ENCODE measurements at regions of chrX and their contacts with region 1.

Region 1: DNA sequence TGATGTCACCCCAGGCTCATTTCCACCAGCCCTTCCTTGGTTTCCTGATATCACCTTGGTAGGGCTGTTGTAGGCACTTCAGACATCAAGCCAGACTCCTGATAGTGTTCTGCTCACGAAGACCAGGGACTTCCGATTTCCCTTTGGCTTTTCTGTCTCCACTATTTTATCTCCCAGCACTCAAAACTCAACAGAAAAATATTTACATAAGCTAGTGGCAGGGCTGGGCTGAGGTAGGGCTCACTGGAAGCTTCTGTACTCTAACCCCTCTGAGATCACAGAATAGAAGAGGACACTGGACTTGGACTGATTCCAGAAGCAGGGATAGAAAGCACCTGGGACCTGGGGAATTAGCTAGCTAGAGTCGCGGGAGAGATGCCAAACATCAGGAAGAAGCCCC is 34.4 kb upstream of the EFNB1 start:
- DNase-seq: no peak
- ATAC-seq: peak in 1 of 8 donors; percentile 29
- H3K4me3 ChIP-seq: no peak overlapping the region
- H3K27ac ChIP-seq: no peak overlapping the region
- H3K4me1 ChIP-seq: no peaks in the 10 kb centered on the region
- H3K27me3 ChIP-seq: peaks cover 0 to 14% (median 0%) of the 10 kb centered on the region in 7 donors
- CTCF ChIP-seq: no peak

Region 2: DNA sequence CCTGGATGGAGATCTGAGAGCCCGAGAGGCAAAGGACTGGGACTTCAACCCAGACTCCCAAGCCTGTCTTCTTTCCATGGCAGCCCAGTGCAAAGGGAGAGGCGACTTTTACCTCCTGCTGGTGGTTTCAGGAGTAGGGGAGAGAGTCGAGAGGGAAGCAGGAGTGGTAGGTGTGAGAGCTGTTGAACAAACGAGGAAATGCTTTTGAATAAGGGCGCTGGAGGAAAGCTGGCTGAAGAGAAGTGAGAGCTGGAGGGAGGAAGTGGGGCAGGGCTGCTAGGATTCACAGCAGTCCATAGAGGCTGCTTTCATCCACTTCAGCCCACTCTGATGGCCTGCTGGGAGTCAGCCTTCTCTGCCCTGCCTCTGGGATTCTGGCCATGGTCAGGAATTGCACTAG is 47.5 kb before region 1 on chrX:
- intact Hi-C with region 1: loop called in 1 of 10 experiments (anchors 10 kb)
- DNase-seq: no peak
- ATAC-seq: no peak
- H3K4me3 ChIP-seq: no peak overlapping the region
- H3K27ac ChIP-seq: no peak overlapping the region
- H3K4me1 ChIP-seq: no peaks in the 10 kb centered on the region
- H3K27me3 ChIP-seq: peaks cover 0 to 5% (median 0%) of the 10 kb centered on the region in 7 donors
- CTCF ChIP-seq: no peak

Region 3: DNA sequence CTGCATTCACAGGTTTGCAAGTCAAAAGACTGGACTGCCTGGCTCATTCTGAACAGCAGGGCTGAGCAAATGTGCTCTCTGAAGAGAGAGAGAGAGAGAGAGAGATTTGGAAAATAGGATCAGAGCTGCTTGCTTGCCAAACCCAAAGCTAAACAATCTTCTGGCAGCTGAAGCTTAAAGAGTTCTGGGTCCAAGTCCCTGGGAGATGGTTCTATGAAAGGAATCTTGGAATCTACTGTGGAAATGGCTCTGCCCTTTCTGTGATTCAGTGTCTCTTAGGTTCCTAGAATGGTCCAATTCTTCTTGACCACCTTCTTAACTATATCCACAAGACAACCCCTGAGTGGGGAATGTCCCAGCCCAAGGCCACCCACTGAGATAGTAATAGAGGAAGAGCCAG is 31.7 kb before region 1 on chrX:
- intact Hi-C with region 1: no loop called
- DNase-seq: no peak
- ATAC-seq: peak in 4 of 8 donors; percentile 17 to 55 (median 32)
- H3K4me3 ChIP-seq: no peak overlapping the region
- H3K27ac ChIP-seq: no peak overlapping the region
- H3K4me1 ChIP-seq: no peaks in the 10 kb centered on the region
- H3K27me3 ChIP-seq: peaks cover 0 to 17% (median 0%) of the 10 kb centered on the region in 7 donors
- CTCF ChIP-seq: no peak

Measured in heart right ventricle (tissue), 16 donors.